ENCODE measurements at regions of chrX and their contacts with region 1.

Region 1: DNA sequence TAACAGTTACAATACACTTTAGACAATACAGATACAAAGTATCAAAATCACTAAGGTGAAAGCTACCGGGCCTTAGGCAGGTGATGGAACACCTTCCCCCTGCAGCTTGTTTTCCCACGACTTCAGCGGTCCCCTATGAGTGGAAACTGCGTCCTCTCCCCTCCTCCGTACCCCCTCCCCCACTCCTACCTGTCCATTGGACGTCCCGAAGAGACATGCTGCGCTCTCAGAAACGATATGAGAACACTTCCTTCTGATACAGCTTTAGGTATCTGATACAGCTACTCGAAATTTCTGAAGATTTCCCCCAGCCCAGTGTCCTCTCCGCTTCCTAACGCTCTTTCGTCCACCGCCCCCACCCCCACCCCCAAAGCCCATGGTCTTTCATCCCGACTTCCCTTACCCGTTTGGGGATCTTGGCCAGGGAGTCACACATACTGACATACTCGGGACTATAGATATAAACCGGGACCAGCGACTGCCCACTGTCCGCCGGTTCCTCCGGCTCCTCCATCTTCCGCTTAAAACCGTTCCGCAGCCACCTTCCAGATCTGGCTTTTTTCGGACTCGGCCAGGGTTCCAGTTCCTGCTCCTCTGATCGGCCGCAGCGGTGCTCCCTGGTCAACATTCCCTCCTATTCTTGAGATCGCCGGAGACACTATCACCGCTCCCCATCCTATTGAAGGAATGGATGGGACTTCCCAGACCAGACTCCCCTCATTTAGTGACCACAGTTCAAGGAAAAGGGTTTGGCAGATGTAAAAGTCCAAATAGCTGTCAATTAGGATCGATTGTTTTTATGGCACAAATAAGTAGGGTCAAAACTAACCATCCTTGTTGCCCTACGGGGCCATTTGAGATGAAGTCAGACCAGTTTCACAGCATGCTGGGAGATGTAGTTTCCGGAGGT is at the start of gene HDAC8:
- DNase-seq: peak; percentile 7 to 49 (median 29)
- ATAC-seq: peak; percentile 91
- H3K4me3 ChIP-seq: peak within 1 kb of the TSS; percentile 97
- H3K4me3 Mint-ChIP-seq: peak within 1 kb of the TSS; percentile 91 to 98 (median 96)
- H3K27ac ChIP-seq: peak within 1 kb of the TSS; percentile 71
- H3K27ac Mint-ChIP-seq: peak within 1 kb of the TSS; percentile 36 to 91 (median 87)
- H3K4me1 ChIP-seq: peaks cover 4 to 6% of the 10 kb centered on the region in 2 donors
- H3K4me1 Mint-ChIP-seq: peaks cover 0 to 10% (median 6%) of the 10 kb centered on the region in 7 donors
- H3K27me3 ChIP-seq: no peaks in the 10 kb centered on the region
- H3K27me3 Mint-ChIP-seq: peaks cover 0 to 11% (median 0%) of the 10 kb centered on the region in 5 donors
- total RNA-seq, gene HDAC8: 13.1 to 30.6 (median 19.7) TPM

Region 2: DNA sequence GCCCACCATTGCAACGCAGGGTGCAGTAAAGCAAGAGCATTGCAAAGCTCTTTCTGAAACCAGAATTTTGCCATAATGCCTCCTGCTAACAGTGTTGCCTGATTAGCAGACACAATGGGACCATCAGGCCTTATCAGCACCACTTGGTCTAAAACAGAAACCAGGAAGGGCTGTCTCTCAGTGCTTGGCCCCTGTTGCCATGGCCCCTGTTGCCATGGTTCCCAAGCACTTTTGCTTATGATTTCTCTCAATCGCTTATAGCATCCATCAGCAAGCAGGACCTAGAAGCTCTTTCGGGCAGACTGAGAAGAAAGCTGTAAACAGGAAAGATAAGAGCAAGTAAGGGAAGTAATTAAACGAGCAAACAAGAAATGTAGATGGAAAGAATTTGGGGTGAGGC is 477.6 kb before region 1 on chrX:
- CTCF ChIA-PET with region 1: no interaction called
- POLR2A ChIA-PET with region 1: no interaction called
- intact Hi-C with region 1: no loop called
- DNase-seq: peak in 5 of 9 donors; percentile 14 to 43 (median 31)
- ATAC-seq: peak; percentile 92
- H3K4me3 ChIP-seq: no peak overlapping the region
- H3K4me3 Mint-ChIP-seq: no peak overlapping the region
- H3K27ac ChIP-seq: no peak overlapping the region
- H3K27ac Mint-ChIP-seq: peak overlapping the region in 4 of 9 donors; percentile 19 to 82 (median 61)
- H3K4me1 ChIP-seq: peaks cover 2 to 19% of the 10 kb centered on the region in 2 donors
- H3K4me1 Mint-ChIP-seq: peaks cover 0 to 7% (median 6%) of the 10 kb centered on the region in 7 donors
- H3K27me3 ChIP-seq: no peaks in the 10 kb centered on the region
- H3K27me3 Mint-ChIP-seq: peaks cover 6 to 53% (median 8%) of the 10 kb centered on the region in 5 donors

Region 3: GRCh38 chrX:72238721-72239475 is 333.6 kb before region 1 on chrX and contains the start of gene ERCC6L:
- CTCF ChIA-PET with region 1: no interaction called
- POLR2A ChIA-PET with region 1: no interaction called
- intact Hi-C with region 1: loop called in 1 of 2 experiments (anchors 5 kb)
- DNase-seq: peak; percentile 71 to 87 (median 81)
- ATAC-seq: peak; percentile 99
- H3K4me3 ChIP-seq: peak within 1 kb of the TSS; percentile 62
- H3K4me3 Mint-ChIP-seq: peak within 1 kb of the TSS; percentile 45 to 87 (median 76)
- H3K27ac ChIP-seq: peak within 1 kb of the TSS; percentile 47
- H3K27ac Mint-ChIP-seq: peak within 1 kb of the TSS in 7 of 9 donors; percentile 48 to 91 (median 56)
- H3K4me1 ChIP-seq: no peaks in the 10 kb centered on the region
- H3K4me1 Mint-ChIP-seq: peaks cover 0 to 17% (median 0%) of the 10 kb centered on the region in 7 donors
- H3K27me3 ChIP-seq: no peaks in the 10 kb centered on the region
- H3K27me3 Mint-ChIP-seq: no peaks in the 10 kb centered on the region
- total RNA-seq, gene ERCC6L: 0.11 to 6.6 (median 0.16) TPM

Region 4: GRCh38 chrX:72308566-72309296 is 263.8 kb before region 1 on chrX:
- CTCF ChIA-PET with region 1: no interaction called
- POLR2A ChIA-PET with region 1: interaction called, 3 read pairs
- intact Hi-C with region 1: loop called in 1 of 2 experiments (anchors 2 kb)
- DNase-seq: peak in 2 of 9 donors; percentile 11 to 32
- ATAC-seq: peak; percentile 53
- H3K4me3 ChIP-seq: peak overlapping the region; percentile 39
- H3K4me3 Mint-ChIP-seq: peak overlapping the region; percentile 48 to 90 (median 79)
- H3K27ac ChIP-seq: no peak overlapping the region
- H3K27ac Mint-ChIP-seq: peak overlapping the region in 1 of 9 donors; percentile 33
- H3K4me1 ChIP-seq: peaks cover 10 to 14% of the 10 kb centered on the region in 2 donors
- H3K4me1 Mint-ChIP-seq: peaks cover 4 to 44% (median 27%) of the 10 kb centered on the region in 7 donors
- H3K27me3 ChIP-seq: peaks cover 0 to 13% of the 10 kb centered on the region in 2 donors
- H3K27me3 Mint-ChIP-seq: peaks cover 12 to 52% (median 30%) of the 10 kb centered on the region in 5 donors

Region 5: DNA sequence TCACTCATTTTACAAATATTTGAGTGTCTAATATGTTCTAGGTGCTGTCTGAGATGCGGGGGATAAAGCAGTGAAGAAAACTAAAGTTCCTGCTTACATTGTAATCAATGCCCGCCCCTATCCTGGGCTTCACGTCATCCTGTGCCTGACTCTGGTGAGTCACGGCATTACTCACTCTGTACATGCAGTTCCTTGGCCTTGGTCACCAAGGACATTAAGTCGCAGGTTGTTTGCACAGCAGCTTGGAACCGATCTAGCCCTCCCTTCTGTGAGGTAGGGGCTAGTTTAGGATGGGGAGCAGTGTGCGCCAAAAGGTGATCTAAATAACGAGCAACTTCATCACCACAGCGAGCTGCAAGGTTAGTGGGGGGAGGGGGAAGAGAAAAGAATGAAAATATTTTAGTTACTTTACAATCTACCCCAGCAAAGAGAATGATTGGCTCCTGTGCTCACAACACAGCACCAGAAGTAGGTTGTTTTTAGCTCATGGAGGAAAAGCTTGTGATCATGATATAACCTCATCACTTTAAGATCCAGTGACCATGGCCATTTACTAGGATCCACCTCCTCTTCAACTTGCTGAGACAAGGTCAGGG is 48.1 kb after region 1 on chrX:
- CTCF ChIA-PET with region 1: no interaction called
- POLR2A ChIA-PET with region 1: no interaction called
- intact Hi-C with region 1: loop called in 1 of 2 experiments (anchors 5 kb)
- DNase-seq: peak in 1 of 9 donors; percentile 35
- ATAC-seq: no peak
- H3K4me3 ChIP-seq: no peak overlapping the region
- H3K4me3 Mint-ChIP-seq: peak overlapping the region in 1 of 10 donors; percentile 69
- H3K27ac ChIP-seq: no peak overlapping the region
- H3K27ac Mint-ChIP-seq: peak overlapping the region in 1 of 9 donors; percentile 87
- H3K4me1 ChIP-seq: no peaks in the 10 kb centered on the region
- H3K4me1 Mint-ChIP-seq: peaks cover 0 to 18% (median 0%) of the 10 kb centered on the region in 7 donors
- H3K27me3 ChIP-seq: no peaks in the 10 kb centered on the region
- H3K27me3 Mint-ChIP-seq: peaks cover 0 to 10% (median 0%) of the 10 kb centered on the region in 5 donors

Region 6: DNA sequence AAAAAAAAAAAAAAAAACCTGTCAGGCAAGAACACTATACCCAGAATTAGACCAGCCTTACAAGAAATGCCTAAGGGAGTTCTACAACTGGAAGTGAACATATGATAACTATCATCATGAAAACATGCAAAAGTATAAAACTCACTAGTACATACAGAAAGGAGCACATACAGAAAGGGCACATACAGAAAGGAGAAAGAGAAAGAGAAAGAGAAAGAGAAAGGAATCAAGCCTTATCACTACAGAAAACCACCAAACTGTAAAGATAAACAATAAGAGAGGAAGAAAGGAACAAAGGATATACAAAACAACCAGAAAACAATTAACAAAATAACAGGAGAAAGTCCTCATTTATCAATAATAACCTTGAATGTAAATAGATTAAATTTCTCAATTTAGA is 91.2 kb after region 1 on chrX:
- CTCF ChIA-PET with region 1: no interaction called
- POLR2A ChIA-PET with region 1: no interaction called
- intact Hi-C with region 1: loop called in 1 of 2 experiments (anchors 5 kb)
- DNase-seq: no peak
- ATAC-seq: no peak
- H3K4me3 ChIP-seq: no peak overlapping the region
- H3K4me3 Mint-ChIP-seq: peak overlapping the region in 1 of 10 donors; percentile 63
- H3K27ac ChIP-seq: no peak overlapping the region
- H3K27ac Mint-ChIP-seq: peak overlapping the region in 1 of 9 donors; percentile 79
- H3K4me1 ChIP-seq: no peaks in the 10 kb centered on the region
- H3K4me1 Mint-ChIP-seq: peaks cover 0 to 21% (median 0%) of the 10 kb centered on the region in 7 donors
- H3K27me3 ChIP-seq: no peaks in the 10 kb centered on the region
- H3K27me3 Mint-ChIP-seq: no peaks in the 10 kb centered on the region